ENCODE measurements at regions of chr22 and their contacts with region 1.

Region 1: DNA sequence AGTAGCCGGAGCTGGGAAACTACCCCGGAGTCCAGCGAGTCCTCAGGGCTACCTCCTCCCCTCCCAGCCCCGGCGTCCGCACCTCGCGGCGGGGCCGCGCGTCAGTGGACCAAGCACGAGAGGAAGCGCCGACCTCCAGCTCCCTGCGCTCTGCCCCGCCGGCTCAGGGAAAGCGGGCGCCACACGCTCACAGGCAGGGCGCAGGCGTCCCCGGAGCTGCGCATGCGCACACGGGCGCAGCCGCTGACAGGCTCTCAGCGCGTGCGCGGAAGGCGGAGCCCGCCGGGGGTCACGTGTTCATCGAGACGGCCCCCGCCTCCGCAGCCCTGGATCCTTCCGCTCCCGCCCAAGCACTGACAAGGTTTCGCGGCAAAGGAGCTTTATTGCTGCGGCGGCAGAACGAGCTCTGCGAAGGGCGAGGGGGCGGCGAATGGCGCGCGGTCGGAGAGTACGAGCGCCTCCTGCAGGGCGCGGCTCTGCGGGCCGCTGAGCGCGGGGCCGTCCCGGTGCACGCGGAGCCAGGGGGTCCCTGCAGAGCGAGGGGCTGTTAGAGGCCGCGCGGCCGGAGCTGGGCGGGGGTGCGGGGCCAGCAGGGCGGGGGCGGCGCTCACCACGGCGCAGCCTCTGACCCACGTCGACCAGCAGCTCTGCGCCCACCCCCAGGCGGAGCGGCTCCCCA is at the start of gene SCO2:
- DNase-seq: peak; percentile 95
- ATAC-seq: peak; percentile 48
- H3K4me3 ChIP-seq: peak within 1 kb of the TSS; percentile 81
- H3K27ac ChIP-seq: peak within 1 kb of the TSS; percentile 78
- H3K4me1 ChIP-seq: peaks cover 12% of the 10 kb centered on the region; the same call in 1 of the 2 replicates
- H3K27me3 ChIP-seq: no peaks in the 10 kb centered on the region
- CTCF ChIP-seq: no peak; the same call in 1 of the 2 replicates
- total RNA-seq, gene SCO2: 5.7 and 5.8 TPM in 2 replicates

Region 2: GRCh38 chr22:50507991-50508884 is 17.3 kb before region 1 on chr22 and contains the start of gene NCAPH2:
- CTCF ChIA-PET with region 1: interaction called, 15 read pairs
- POLR2A ChIA-PET with region 1: interaction called, 8 read pairs
- intact Hi-C with region 1: no loop called
- DNase-seq: peak; percentile 94
- ATAC-seq: peak; percentile 62
- H3K4me3 ChIP-seq: peak within 1 kb of the TSS; percentile 97
- H3K27ac ChIP-seq: peak within 1 kb of the TSS; percentile 56
- H3K4me1 ChIP-seq: peaks cover 7% of the 10 kb centered on the region
- H3K27me3 ChIP-seq: no peaks in the 10 kb centered on the region
- CTCF ChIP-seq: no peak
- total RNA-seq, gene NCAPH2: 75.4 and 92.1 TPM in 2 replicates

Region 3: GRCh38 chr22:50562523-50563412 is 37.2 kb after region 1 on chr22 and contains the start of gene SYCE3:
- CTCF ChIA-PET with region 1: no interaction called
- POLR2A ChIA-PET with region 1: interaction called, 4 read pairs
- intact Hi-C with region 1: loop called (anchors 5 kb)
- DNase-seq: peak; percentile 92
- ATAC-seq: peak; percentile 96
- H3K4me3 ChIP-seq: peak within 1 kb of the TSS; percentile 84
- H3K27ac ChIP-seq: no peak within 1 kb of the TSS
- H3K4me1 ChIP-seq: peaks cover 7% of the 10 kb centered on the region
- H3K27me3 ChIP-seq: no peaks in the 10 kb centered on the region
- CTCF ChIP-seq: peak; percentile 62
- total RNA-seq, gene SYCE3: 1.3 TPM in 1 of 2 replicates, not detected in the other